ENCODE measurements at regions of chr11 and their contacts with region 1.

Region 1: DNA sequence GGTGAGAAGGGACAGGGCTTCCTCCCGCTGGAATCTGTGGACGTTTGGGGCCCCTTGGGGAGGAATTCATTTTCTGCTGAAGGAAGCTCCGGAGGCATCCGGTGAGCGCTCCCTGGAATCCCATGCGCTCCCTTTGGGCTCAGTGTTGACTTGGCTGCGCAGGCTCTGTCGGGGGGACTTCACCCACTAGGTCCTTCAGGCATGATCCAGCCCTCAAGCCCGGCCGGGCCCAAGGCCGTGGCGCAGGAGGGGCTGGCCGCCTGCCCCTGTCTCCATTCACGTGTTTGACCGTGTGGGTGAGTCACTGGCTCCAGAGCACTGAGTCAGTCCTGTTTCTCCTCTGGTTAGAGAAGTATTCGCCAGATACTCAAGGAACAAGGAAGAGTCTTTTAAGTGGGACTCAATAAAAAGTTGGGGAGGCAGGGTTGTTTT is 1.4 kb downstream of the CTTN start:
- DNase-seq: peak; percentile 61 to 88 (median 72)
- H3K4me3 ChIP-seq: peak overlapping the region in 1 of 3 experiments; percentile 55
- H3K4me3 Mint-ChIP-seq: peak overlapping the region; percentile 24 to 86
- H3K27ac ChIP-seq: no peak overlapping the region
- H3K27ac Mint-ChIP-seq: peak overlapping the region in 5 of 7 donors; percentile 18 to 75 (median 58)
- H3K4me1 ChIP-seq: peaks cover 35 to 36% of the 10 kb centered on the region in 2 donors
- H3K4me1 Mint-ChIP-seq: peaks cover 31% of the 10 kb centered on the region
- H3K27me3 ChIP-seq: peaks cover 82 to 91% of the 10 kb centered on the region in 2 donors
- H3K27me3 Mint-ChIP-seq: peaks cover 90 to 98% (median 93%) of the 10 kb centered on the region in 3 donors
- CTCF ChIP-seq: no peak

Region 2: GRCh38 chr11:70233034-70233995 is 166.4 kb before region 1 on chr11:
- intact Hi-C with region 1: no loop called
- DNase-seq: no peak
- H3K4me3 ChIP-seq: no peak overlapping the region
- H3K4me3 Mint-ChIP-seq: no peak overlapping the region
- H3K27ac ChIP-seq: no peak overlapping the region
- H3K27ac Mint-ChIP-seq: no peak overlapping the region
- H3K4me1 ChIP-seq: no peaks in the 10 kb centered on the region
- H3K4me1 Mint-ChIP-seq: no peaks in the 10 kb centered on the region
- H3K27me3 ChIP-seq: no peaks in the 10 kb centered on the region
- H3K27me3 Mint-ChIP-seq: peaks cover 4 to 12% (median 8%) of the 10 kb centered on the region in 3 donors
- CTCF ChIP-seq: no peak

Region 3: DNA sequence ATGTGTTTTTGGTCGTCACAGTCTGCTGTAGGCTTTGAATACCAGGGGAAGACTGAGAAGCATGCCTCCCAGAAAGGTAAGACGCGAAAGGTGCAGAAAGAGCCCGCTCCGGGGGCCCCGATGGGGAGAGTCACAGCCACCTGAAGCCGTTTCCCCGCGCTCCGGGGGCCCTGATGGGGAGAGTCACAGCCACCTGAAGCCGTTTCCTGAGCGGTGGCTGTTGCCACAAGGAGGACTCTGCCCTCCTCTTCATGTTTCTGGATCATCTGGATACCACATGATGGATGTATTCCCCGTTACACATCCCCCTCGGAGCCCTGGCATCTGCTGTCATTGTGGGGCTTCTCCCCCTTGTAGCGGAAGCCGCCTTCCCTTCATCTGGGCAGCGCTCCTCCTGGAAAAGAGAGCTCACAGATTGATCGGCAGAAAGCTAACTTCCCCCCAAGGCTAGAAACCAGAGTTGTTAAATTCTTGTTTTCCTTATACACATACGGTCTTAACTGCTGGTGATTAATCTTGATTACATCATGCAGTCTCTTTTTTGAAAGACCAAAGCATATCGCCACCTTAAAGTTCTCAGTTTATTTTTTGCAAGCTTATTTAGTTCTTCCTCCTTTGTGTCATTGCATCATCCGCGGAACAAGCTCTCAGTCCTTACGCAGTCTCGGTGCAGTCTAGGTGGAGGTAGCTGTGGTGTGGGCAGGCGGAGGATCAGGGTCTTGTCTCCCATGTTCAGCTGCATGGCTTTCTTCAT is 16.1 kb after region 1 on chr11:
- intact Hi-C with region 1: loop called in 1 of 2 experiments (anchors 1 kb)
- DNase-seq: peak; percentile 53 to 85 (median 81)
- H3K4me3 ChIP-seq: peak overlapping the region in 1 of 3 experiments; percentile 11
- H3K4me3 Mint-ChIP-seq: peak overlapping the region; percentile 64 to 82
- H3K27ac ChIP-seq: no peak overlapping the region
- H3K27ac Mint-ChIP-seq: peak overlapping the region in 6 of 7 donors; percentile 42 to 89 (median 59)
- H3K4me1 ChIP-seq: peaks cover 14 to 16% of the 10 kb centered on the region in 2 donors
- H3K4me1 Mint-ChIP-seq: peaks cover 16% of the 10 kb centered on the region
- H3K27me3 ChIP-seq: peaks cover 28 to 96% of the 10 kb centered on the region in 2 donors
- H3K27me3 Mint-ChIP-seq: peaks cover 87 to 99% (median 95%) of the 10 kb centered on the region in 3 donors
- CTCF ChIP-seq: no peak